ENCODE measurements at regions of chr11 and their contacts with region 1.

Region 1: GRCh38 chr11:93734427-93735222 is 6.7 kb downstream of the TAF1D start:
- DNase-seq: no peak
- ATAC-seq: no peak

Region 2: DNA sequence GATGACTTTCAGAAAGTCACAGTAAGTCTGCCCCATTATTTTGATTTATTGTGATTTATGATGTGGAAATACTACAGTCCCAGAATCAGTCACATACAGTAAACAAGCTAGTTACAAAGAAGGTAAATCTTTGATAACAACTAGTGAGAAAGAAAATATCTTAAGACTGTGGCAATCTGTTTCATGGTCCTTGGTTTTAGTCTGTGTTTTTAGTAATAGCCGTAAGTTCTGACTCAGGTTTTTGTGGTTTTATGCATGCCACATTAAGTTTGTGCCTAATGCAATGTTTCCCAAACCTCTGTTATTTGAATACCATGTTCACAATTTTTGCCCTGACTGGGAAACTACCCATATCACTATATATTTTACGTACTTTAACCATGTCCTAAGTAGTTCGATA is 66.5 kb before region 1 on chr11:
- intact Hi-C with region 1: loop called in 1 of 2 experiments (anchors 5 kb)
- DNase-seq: no peak
- ATAC-seq: no peak

Measured in left cardiac atrium (tissue), 4 donors.